ENCODE measurements at regions of chrX and their contacts with region 1.

Region 1: DNA sequence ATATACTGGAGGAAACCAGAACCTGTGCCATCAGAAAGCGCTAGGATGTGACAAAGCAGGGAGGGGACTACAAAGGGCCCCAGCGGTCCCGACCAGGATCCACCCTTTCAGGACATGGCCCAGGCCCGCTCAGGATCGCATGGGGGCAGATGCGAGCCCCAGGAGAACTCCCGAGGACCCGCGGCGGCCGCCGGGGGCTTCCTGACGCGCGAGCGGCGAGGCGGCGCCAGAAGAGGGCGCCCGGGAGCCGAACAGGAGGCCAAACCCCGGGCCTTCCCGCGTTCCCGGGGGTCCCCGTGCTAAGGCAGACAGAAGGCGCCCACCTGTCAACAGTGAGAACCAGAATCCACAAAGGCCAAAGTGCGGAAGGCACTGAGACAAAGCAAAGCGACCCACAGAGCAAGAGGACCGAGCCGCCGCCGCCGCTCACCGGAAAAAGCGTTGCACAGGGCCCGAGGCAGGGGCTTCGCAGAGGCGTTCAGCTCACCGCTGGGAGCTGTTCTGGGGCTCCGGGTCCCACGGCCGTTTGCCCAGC is 7.3 kb upstream of the OPN1LW start:
- DNase-seq: peak; percentile 42 to 86 (median 71)
- ATAC-seq: peak; percentile 68
- H3K4me3 ChIP-seq: peak overlapping the region; percentile 37 to 46
- H3K4me3 Mint-ChIP-seq: peak overlapping the region; percentile 72
- H3K27ac ChIP-seq: peak overlapping the region; percentile 31 to 81
- H3K27ac Mint-ChIP-seq: peak overlapping the region; percentile 91
- H3K4me1 ChIP-seq: peaks cover 22% of the 10 kb centered on the region
- H3K4me1 Mint-ChIP-seq: peaks cover 22% of the 10 kb centered on the region
- H3K27me3 ChIP-seq: no peaks in the 10 kb centered on the region
- H3K27me3 Mint-ChIP-seq: no peaks in the 10 kb centered on the region
- CTCF ChIP-seq: peak; percentile 66

Region 2: GRCh38 chrX:154123241-154124219 is 13.2 kb before region 1 on chrX:
- CTCF ChIA-PET with region 1: interaction called, 13 read pairs
- POLR2A ChIA-PET with region 1: no interaction called
- intact Hi-C with region 1: no loop called
- DNase-seq: peak in 6 of 9 experiments; percentile 25 to 65 (median 33)
- ATAC-seq: peak; percentile 75
- H3K4me3 ChIP-seq: no peak overlapping the region
- H3K4me3 Mint-ChIP-seq: peak overlapping the region; percentile 40
- H3K27ac ChIP-seq: peak overlapping the region in 1 of 2 experiments; percentile 54
- H3K27ac Mint-ChIP-seq: no peak overlapping the region
- H3K4me1 ChIP-seq: peaks cover 31% of the 10 kb centered on the region
- H3K4me1 Mint-ChIP-seq: peaks cover 18% of the 10 kb centered on the region
- H3K27me3 ChIP-seq: no peaks in the 10 kb centered on the region
- H3K27me3 Mint-ChIP-seq: no peaks in the 10 kb centered on the region
- CTCF ChIP-seq: no peak

Measured in CD8-positive, alpha-beta T cell (primary cell).